Activated T-helper 2 cell treated with anti-CD3 and anti-CD28 coated beads, Interferon-gamma antibody, Interleukin-2, Interleukin-4, amounts not matched to agents 10 μg/mL and 5 μg/mL and 100 μg/mL, durations not matched to agents 14 hours and 24 hours and 36 hours (primary cell): ENCODE measurements at regions of chr4 and their contacts with region 1.

Region 1: DNA sequence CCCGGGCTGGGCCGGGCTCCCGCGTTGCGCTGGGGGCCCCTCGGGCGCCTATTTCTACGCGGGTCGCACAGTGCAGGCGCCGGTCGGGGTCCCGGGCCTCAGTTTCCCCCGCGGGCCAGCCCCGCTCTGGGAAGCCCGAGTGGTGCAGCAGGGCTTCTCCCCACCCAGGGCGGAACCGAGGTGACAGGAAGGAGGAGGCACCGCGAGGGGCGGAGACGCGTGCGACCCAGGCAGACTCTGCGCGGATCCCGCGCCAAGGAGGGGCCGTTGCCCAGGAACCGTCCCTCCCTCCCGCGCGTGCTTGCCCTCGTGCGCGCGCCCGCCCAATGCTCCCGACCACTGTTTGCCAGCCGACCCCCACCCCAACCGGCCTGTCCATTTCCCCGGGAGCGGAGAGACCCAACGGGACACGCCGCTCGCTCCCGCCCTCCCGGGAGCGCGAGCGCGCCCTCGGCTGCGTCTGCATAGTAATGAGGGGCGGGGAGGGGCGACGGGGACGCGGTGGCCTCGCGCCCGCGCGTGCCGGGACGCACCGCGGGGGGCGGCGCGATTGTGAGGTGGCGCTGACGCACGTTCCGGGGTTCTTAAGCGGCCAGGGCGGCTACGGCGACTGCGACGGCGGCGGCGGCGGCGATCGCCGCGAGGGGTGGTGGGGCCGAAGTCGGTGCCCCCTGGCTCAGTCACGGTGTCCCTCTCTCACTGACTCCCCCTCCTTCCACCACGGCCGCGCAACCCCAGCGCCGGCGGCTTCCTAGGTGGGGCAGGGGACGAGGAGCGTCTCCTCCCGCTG is at the start of gene CPEB2:
- DNase-seq: peak; percentile 89
- H3K4me3 Mint-ChIP-seq: peak within 1 kb of the TSS; percentile 87
- H3K27ac Mint-ChIP-seq: peak within 1 kb of the TSS; percentile 92
- H3K4me1 Mint-ChIP-seq: peaks cover 36% of the 10 kb centered on the region
- H3K27me3 Mint-ChIP-seq: no peaks in the 10 kb centered on the region
- total RNA-seq, gene CPEB2: 11.0 and 12.3 TPM in 2 replicates

Region 2: DNA sequence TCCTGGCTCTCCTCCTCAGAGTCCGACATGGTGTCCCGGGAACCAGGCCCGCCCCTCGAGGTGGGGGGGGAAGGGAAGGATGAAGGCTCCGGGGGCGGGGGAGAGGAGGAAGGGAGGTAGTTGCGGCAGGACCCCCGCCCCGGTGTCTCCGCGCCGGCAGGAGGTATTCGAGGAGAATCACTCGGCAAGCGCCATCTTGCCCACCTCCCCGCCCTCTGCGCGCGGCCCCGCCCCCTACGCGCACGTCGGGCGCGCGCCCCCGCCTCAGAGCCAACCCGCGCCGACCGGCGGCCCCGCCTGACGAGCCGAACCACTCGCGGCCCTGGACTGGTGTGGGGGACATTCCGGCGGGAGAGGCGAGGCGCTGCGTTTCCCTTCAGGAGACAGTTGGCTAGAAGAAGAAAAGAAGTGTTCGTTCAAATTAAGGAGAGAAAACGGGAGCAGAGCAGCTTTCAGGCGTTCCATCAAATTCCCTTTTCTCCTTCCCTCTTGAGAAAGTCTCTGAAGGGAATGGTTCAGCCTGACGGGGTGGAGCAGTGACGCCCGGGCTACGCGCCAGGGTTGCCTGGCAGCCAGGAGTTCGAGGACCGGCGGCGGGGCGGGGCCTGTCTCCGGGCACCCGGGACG is 1517.8 kb before region 1 on chr4 and contains the start of gene RAB28:
- intact Hi-C with region 1: loop called (anchors 5 kb)
- DNase-seq: peak; percentile 90
- H3K4me3 Mint-ChIP-seq: peak within 1 kb of the TSS; percentile 86
- H3K27ac Mint-ChIP-seq: peak within 1 kb of the TSS; percentile 96
- H3K4me1 Mint-ChIP-seq: peaks cover 25% of the 10 kb centered on the region
- H3K27me3 Mint-ChIP-seq: peaks cover 20% of the 10 kb centered on the region
- total RNA-seq, gene RAB28: 17.4 and 19.3 TPM in 2 replicates

Region 3: GRCh38 chr4:14787894-14788293 is 214.2 kb before region 1 on chr4:
- intact Hi-C with region 1: loop called (anchors 5 kb)
- DNase-seq: no peak
- H3K4me3 Mint-ChIP-seq: no peak overlapping the region
- H3K27ac Mint-ChIP-seq: no peak overlapping the region
- H3K4me1 Mint-ChIP-seq: peaks cover 14% of the 10 kb centered on the region
- H3K27me3 Mint-ChIP-seq: no peaks in the 10 kb centered on the region

Region 4: DNA sequence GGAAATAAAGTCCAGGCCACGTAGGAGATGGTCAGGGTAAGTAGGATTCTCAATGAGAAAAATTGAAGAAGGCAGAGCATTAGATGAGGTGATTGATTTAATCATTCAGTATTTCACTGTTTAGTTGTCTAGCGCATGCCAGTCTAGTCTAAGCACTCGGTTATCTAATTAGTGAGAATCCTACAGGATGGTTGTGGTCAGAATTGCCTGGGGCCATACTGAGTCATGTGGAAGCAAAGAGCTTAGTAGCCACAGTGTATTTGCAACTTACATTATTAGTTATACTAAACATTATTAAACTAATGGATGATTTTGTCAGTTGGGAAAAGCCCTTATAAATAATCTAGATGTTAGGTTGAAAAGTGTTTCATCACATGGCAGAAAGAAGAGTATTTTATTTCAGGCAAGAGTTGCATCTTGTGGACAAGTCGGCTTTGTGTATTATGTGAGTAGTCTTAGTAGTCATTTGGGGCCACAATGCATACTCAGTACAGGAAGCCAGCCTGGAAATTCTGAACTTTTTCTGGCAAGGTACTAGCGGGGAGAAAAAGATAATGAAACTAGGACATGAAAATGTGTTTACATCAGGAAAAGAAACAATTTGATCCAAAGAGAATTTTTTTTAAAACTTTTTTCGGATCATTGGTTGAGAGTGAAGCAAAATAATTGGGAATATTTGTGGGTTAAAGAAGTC is 32.2 kb after region 1 on chr4:
- intact Hi-C with region 1: loop called (anchors 2 kb)
- DNase-seq: no peak
- H3K4me3 Mint-ChIP-seq: no peak overlapping the region
- H3K27ac Mint-ChIP-seq: no peak overlapping the region
- H3K4me1 Mint-ChIP-seq: peaks cover 29% of the 10 kb centered on the region
- H3K27me3 Mint-ChIP-seq: no peaks in the 10 kb centered on the region

Region 5: GRCh38 chr4:15681207-15682015 is 679.3 kb after region 1 on chr4 and contains the start of gene FAM200B:
- intact Hi-C with region 1: loop called (anchors 2 kb)
- DNase-seq: peak; percentile 97
- H3K4me3 Mint-ChIP-seq: peak within 1 kb of the TSS; percentile 99
- H3K27ac Mint-ChIP-seq: peak within 1 kb of the TSS; percentile 94
- H3K4me1 Mint-ChIP-seq: peaks cover 34% of the 10 kb centered on the region
- H3K27me3 Mint-ChIP-seq: no peaks in the 10 kb centered on the region
- total RNA-seq, gene FAM200B: 5.6 and 6.8 TPM in 2 replicates

Region 6: DNA sequence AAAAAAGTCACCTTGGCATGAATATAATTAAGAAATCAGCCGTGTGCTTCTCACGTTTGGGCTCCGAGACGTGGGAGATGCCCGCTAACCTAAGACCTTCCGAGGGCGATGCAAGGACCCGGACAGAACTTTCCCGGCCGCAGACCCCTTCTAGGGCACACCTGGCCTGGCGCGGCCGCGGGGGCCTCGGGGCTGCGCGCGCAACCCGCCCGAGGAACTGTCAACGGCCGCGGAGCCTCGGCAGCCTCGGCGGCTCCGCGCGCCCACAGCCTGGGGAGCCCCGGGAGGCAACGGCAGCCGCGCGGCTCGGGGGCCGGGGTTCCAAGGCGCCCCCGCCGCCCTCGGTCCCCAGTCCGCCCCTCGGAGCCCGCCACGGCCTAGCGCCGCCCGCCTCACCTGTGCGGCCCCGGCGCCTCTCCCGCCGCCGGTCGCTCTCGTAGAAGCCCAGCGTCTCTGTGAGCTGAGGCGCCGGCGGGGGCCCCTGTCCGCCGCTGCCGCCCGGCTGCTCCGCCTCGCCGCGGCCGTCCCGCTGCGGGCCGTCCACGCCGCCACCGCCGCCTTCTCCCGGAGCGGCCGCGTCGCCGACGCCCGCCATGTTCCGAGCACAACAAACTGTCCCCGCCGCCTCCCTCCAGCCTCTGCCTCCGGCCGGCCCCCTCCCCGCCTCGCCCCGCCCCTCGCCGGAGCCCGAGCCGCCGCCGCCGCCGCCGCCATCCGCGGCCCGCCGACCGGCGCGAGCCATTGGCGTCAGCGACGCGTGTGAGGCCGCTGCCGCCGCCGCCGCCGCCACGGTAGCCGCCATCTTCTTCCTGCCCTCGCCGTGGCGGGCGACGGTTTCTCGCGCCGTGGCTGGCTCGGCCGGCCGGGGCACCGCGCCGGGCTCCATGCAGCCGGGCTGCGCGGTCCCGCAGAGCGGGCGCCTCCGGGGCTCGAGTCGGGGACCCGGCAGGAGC is 1224.1 kb after region 1 on chr4 and contains the start of gene TAPT1:
- intact Hi-C with region 1: loop called (anchors 10 kb)
- DNase-seq: peak; percentile 74
- H3K4me3 Mint-ChIP-seq: peak within 1 kb of the TSS; percentile 95
- H3K27ac Mint-ChIP-seq: peak within 1 kb of the TSS; percentile 98
- H3K4me1 Mint-ChIP-seq: peaks cover 48% of the 10 kb centered on the region
- H3K27me3 Mint-ChIP-seq: no peaks in the 10 kb centered on the region
- total RNA-seq, gene TAPT1: 28.1 and 32.9 TPM in 2 replicates